ENCODE measurements at regions of chr6 and their contacts with region 1.

Region 1: GRCh38 chr6:121055572-121056163 is 278.6 kb downstream of the TBC1D32 start:
- DNase-seq: no peak
- ATAC-seq: peak in 3 of 4 donors; percentile 67 to 69 (median 69)
- H3K4me3 ChIP-seq: no peak overlapping the region
- H3K27ac ChIP-seq: no peak overlapping the region
- H3K4me1 ChIP-seq: no peaks in the 10 kb centered on the region
- H3K27me3 ChIP-seq: no peaks in the 10 kb centered on the region
- CTCF ChIP-seq: peak; percentile 54 to 81 (median 68)
- POLR2A ChIP-seq: no peak

Region 2: GRCh38 chr6:120966321-120966720 is 89.3 kb before region 1 on chr6:
- intact Hi-C with region 1: no loop called
- DNase-seq: no peak
- ATAC-seq: no peak
- H3K4me3 ChIP-seq: no peak overlapping the region
- H3K27ac ChIP-seq: no peak overlapping the region
- H3K4me1 ChIP-seq: no peaks in the 10 kb centered on the region
- H3K27me3 ChIP-seq: no peaks in the 10 kb centered on the region
- CTCF ChIP-seq: no peak
- POLR2A ChIP-seq: no peak

Region 3: DNA sequence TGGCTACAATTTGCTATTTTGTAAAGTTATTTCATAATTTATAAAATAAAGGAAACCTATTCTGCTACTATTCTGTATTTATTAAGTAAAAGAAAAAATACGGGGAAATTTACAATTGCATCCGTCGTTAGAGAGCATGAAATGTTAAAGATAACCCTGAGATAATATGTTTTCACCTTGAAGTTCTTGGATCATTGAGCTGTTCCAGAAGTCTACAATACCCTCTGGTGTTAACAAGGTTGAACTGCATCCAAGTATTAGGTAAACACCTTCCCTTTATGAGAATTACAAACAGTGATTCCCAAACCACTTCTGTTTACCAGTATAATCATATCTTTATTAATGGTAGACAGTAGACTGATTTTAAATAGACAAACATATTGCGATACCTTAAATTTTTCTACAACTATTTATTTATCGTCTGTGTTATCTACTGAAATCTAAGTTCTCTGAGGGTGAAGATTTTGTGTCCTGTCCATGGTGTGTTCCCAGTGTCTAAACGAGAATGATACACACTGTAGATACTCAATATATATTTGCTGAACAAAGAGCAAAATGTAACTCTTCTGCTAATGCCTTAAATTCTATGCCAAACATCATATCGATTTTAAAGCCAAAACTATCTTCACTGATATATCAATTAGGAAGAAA is 250.4 kb after region 1 on chr6:
- intact Hi-C with region 1: loop called (anchors 2 to 10 kb)
- DNase-seq: no peak
- ATAC-seq: no peak
- H3K4me3 ChIP-seq: no peak overlapping the region
- H3K27ac ChIP-seq: no peak overlapping the region
- H3K4me1 ChIP-seq: no peaks in the 10 kb centered on the region
- H3K27me3 ChIP-seq: no peaks in the 10 kb centered on the region
- CTCF ChIP-seq: peak; percentile 30 to 62 (median 46)
- POLR2A ChIP-seq: no peak

Region 4: DNA sequence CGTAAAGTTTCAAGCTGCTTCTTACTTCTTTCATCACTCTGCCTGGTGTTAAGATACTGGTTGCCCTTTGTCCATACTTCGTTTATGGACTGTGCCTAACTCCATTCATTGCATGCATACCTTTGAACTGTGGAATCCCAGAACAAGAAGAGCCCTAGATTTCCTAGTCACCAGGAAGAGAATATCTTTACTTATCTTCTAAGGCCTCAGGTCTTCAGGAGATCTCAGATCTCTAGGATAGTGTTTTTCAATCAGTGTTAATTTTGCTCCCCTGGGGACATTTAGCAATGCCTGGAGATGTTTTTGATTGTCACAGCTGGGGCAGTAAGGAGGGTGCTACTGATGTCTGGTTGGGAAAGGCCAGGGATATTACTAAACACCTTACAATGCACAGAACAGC is 344.3 kb after region 1 on chr6:
- intact Hi-C with region 1: loop called in 3 of 10 experiments (anchors 2 to 10 kb)
- DNase-seq: no peak
- ATAC-seq: no peak
- H3K4me3 ChIP-seq: no peak overlapping the region
- H3K27ac ChIP-seq: no peak overlapping the region
- H3K4me1 ChIP-seq: no peaks in the 10 kb centered on the region
- H3K27me3 ChIP-seq: no peaks in the 10 kb centered on the region
- CTCF ChIP-seq: no peak
- POLR2A ChIP-seq: no peak

Region 5: GRCh38 chr6:122184401-122184827 is 1128.7 kb after region 1 on chr6:
- intact Hi-C with region 1: loop called in 1 of 10 experiments (anchors 10 kb)
- DNase-seq: no peak
- ATAC-seq: peak; percentile 51 to 83 (median 74)
- H3K4me3 ChIP-seq: peak overlapping the region in 7 of 12 donors; percentile 22 to 43 (median 34)
- H3K27ac ChIP-seq: no peak overlapping the region
- H3K4me1 ChIP-seq: peaks cover 0 to 10% (median 0%) of the 10 kb centered on the region in 12 donors
- H3K27me3 ChIP-seq: no peaks in the 10 kb centered on the region
- CTCF ChIP-seq: peak; percentile 16 to 61 (median 49)
- POLR2A ChIP-seq: no peak

Region 6: DNA sequence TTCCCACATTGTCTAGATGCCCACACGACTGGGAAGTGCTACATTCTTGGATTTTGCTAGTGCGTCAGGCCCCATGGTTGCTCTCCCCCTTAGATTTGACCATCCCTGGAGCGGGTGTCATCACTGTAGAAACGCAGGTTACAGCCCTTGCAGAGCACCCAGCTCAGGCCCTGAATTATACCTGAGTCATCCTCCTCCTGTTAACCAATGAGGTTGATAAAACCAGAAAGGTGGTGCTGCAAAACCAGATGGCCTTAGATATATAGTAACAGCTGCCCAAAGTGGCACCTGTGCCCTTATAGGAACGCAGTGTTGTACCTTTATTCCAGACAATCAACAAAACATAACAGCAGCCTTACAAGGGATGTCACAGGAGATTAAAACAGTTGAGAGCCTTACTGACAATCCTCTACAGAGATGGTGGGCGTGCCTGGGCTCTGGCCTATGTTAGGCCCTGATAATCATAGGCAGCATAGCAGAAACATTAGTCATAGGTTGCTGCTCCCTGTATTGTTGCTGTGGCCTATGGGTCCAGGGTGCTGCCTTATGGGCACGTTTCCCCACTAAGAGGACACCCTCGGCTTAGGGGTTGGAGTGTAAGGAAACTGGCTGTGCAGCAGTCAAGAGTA is 1310.2 kb after region 1 on chr6:
- intact Hi-C with region 1: loop called in 3 of 10 experiments (anchors 5 to 10 kb)
- DNase-seq: no peak
- ATAC-seq: peak in 1 of 4 donors; percentile 38
- H3K4me3 ChIP-seq: no peak overlapping the region
- H3K27ac ChIP-seq: no peak overlapping the region
- H3K4me1 ChIP-seq: no peaks in the 10 kb centered on the region
- H3K27me3 ChIP-seq: no peaks in the 10 kb centered on the region
- CTCF ChIP-seq: no peak
- POLR2A ChIP-seq: no peak